Ovary (tissue), 10 donors: ENCODE measurements at regions of chr15 and their contacts with region 1.

Region 1: DNA sequence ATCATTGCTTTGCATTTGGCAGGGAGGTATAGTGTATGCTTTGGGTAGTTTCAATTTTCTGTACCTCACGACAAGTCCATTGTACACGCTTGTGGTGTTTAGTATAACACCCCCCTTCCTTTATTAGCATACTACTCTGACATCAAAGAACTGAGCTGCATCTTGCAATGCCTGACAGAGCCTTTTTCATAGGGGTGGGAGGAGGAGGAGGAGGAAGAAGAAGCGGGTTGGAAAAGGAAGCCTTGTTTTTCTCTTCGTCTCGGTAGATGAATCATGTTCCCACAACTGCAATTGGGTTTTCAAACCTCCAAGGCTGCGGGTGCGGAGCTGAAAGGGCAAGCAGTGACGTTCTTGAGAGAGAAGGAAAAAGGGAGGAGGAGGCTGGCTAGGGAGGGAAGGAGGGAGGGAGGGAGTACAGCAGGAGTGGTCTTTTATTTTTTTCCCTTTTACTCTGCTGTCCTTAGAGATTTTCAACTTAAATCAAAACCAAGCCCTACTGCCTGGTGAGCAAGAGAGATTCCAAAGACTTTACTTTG is 175.7 kb downstream of the KLHL25 start:
- DNase-seq: peak; percentile 79 to 90 (median 83)
- H3K4me3 ChIP-seq: peak overlapping the region; percentile 72
- H3K27ac ChIP-seq: peak overlapping the region; percentile 17 to 76
- H3K4me1 ChIP-seq: peaks cover 12% of the 10 kb centered on the region
- H3K27me3 ChIP-seq: no peaks in the 10 kb centered on the region
- CTCF ChIP-seq: no peak
- EP300 ChIP-seq: no peak
- POLR2A ChIP-seq: peak; percentile 58

Region 2: DNA sequence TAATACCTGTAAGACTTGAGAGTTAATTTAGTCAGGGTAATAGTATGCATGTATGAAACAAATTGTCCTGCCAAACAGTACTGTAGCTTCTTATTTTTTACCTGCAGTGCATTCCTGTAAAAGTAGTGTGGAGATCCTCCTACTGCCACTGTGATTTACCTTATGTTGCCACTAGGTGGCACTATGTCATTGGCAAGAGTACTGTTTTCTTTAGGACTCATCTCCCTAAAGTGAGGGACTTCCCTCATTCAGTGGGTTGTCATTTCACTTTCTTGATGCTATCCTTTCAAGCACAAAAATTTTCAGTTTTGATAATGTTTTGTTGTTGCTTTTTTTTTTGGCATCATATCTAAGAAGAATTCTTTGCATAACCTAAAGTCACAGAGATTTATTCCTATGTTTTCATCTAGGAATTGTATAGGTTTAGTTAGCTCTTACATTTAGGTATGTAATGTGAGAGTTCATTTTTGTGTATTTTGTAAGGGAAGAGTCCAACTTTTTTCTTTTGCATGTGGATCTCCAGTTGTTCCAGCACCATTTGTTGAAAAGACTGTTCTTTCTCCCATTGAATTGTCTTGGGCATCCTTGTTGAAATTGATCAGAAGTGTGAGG is 133.0 kb before region 1 on chr15:
- intact Hi-C with region 1: loop called in 1 of 4 experiments (anchors 10 kb)
- DNase-seq: peak in 3 of 5 donors; percentile 23 to 72 (median 36)
- H3K4me3 ChIP-seq: no peak overlapping the region
- H3K27ac ChIP-seq: no peak overlapping the region
- H3K4me1 ChIP-seq: no peaks in the 10 kb centered on the region
- H3K27me3 ChIP-seq: no peaks in the 10 kb centered on the region
- CTCF ChIP-seq: peak; percentile 61 to 74 (median 67)
- EP300 ChIP-seq: no peak
- POLR2A ChIP-seq: no peak

Region 3: GRCh38 chr15:85543741-85544155 is 75.3 kb before region 1 on chr15:
- intact Hi-C with region 1: no loop called
- DNase-seq: peak; percentile 66 to 77 (median 73)
- H3K4me3 ChIP-seq: no peak overlapping the region
- H3K27ac ChIP-seq: no peak overlapping the region
- H3K4me1 ChIP-seq: no peaks in the 10 kb centered on the region
- H3K27me3 ChIP-seq: no peaks in the 10 kb centered on the region
- CTCF ChIP-seq: peak; percentile 20 to 49 (median 27)
- EP300 ChIP-seq: no peak
- POLR2A ChIP-seq: no peak

Region 4: GRCh38 chr15:85676720-85677098 is 57.7 kb after region 1 on chr15:
- intact Hi-C with region 1: loop called in 1 of 4 experiments (anchors 1 kb)
- DNase-seq: no peak
- H3K4me3 ChIP-seq: no peak overlapping the region
- H3K27ac ChIP-seq: no peak overlapping the region
- H3K4me1 ChIP-seq: peaks cover 4% of the 10 kb centered on the region
- H3K27me3 ChIP-seq: no peaks in the 10 kb centered on the region
- CTCF ChIP-seq: no peak
- EP300 ChIP-seq: no peak
- POLR2A ChIP-seq: no peak

Region 5: DNA sequence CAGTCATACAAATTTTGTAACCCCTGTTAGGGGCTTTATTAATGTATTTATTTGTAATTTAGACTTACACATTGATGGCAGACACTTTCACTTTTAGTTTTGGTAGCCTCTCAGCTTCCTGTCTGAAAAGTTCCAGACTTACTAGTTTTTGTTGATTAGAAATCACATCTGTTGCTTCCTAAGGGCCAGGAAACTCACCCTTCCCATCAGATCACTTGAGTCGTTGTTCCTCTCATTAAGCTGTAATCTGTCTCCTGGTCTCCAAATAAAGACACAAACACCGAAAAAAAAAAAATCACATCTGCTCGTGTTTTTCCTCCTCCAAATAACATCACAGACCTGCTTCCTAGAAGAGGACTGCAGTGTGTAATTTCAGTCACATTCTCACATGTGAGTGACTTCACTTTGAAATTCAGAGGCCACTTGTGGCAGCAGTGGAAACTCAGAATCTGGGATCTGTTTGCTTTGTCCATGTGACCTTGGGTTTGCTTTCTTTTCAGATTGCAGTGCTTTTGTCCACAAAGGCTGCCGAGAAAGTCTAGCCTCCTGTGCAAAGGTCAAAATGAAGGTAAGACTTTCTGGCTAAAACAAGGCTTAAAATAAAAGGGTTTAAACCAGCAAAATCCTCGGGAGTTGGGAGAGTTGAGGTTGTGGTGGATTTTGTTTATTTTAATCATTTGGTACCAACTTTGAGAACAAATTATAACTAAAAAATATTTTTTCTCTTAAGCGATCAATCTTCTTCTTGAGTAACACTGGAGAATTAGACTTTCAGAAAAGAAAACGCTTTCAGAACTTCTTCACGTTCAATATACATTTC is 88.7 kb after region 1 on chr15:
- intact Hi-C with region 1: loop called in 2 of 4 experiments (anchors 10 kb)
- DNase-seq: no peak
- H3K4me3 ChIP-seq: no peak overlapping the region
- H3K27ac ChIP-seq: peak overlapping the region; percentile 82 to 92
- H3K4me1 ChIP-seq: peaks cover 20% of the 10 kb centered on the region
- H3K27me3 ChIP-seq: no peaks in the 10 kb centered on the region
- CTCF ChIP-seq: no peak
- EP300 ChIP-seq: no peak
- POLR2A ChIP-seq: no peak

Region 6: GRCh38 chr15:85730001-85730820 is 111.2 kb after region 1 on chr15:
- intact Hi-C with region 1: loop called in 2 of 4 experiments (anchors 10 kb)
- DNase-seq: peak in 1 of 5 donors; percentile 58
- H3K4me3 ChIP-seq: no peak overlapping the region
- H3K27ac ChIP-seq: no peak overlapping the region
- H3K4me1 ChIP-seq: peaks cover 6% of the 10 kb centered on the region
- H3K27me3 ChIP-seq: no peaks in the 10 kb centered on the region
- CTCF ChIP-seq: peak; percentile 55 to 79 (median 66)
- EP300 ChIP-seq: no peak
- POLR2A ChIP-seq: no peak

Region 7: GRCh38 chr15:85794603-85795336 is 175.7 kb after region 1 on chr15 and contains the start of gene KLHL25:
- intact Hi-C with region 1: loop called in 1 of 4 experiments (anchors 10 kb)
- DNase-seq: peak; percentile 93 to 95 (median 94)
- H3K4me3 ChIP-seq: peak within 1 kb of the TSS; percentile 96
- H3K27ac ChIP-seq: peak within 1 kb of the TSS; percentile 47 to 85
- H3K4me1 ChIP-seq: peaks cover 5% of the 10 kb centered on the region
- H3K27me3 ChIP-seq: no peaks in the 10 kb centered on the region
- CTCF ChIP-seq: peak in 1 of 3 donors; percentile 13
- EP300 ChIP-seq: no peak
- POLR2A ChIP-seq: peak; percentile 71
- total RNA-seq, gene KLHL25: 5.3 to 9.6 (median 7.1) TPM

Region 8: DNA sequence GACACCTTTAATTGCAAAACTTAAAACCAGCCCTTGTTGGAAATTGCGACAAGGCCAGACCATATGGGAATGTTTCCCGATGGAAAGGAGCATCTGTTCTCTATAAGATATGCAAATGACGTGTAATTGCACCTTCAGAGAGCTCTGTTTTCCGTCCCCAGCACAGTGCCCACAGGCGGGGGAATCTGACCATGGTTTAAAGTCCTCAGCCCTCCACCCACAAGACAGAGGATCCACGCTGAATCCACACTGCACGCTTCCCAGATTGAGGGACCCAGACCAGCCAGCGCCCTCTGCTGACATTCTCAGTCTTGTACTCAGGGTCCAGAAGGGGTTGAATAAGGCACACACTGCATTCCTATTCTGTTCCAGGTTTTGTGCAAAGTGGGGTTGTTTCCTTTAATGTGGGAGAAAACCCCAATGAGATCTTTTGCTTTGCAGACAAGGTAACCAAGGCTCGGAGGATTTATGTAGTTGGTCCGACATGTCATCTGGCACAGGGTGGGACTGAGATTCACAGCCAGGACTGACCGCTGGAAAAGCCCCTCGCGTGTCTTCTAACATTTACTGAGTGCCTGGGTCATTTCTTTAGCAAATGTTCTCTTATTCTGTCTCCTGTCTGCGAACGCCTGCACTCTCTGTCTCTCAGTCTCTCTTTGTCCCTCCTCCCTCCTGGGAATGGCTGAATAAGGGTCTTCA is 212.5 kb after region 1 on chr15:
- intact Hi-C with region 1: loop called in 2 of 4 experiments (anchors 10 kb)
- DNase-seq: peak; percentile 69 to 82 (median 77)
- H3K4me3 ChIP-seq: no peak overlapping the region
- H3K27ac ChIP-seq: no peak overlapping the region
- H3K4me1 ChIP-seq: no peaks in the 10 kb centered on the region
- H3K27me3 ChIP-seq: no peaks in the 10 kb centered on the region
- CTCF ChIP-seq: peak; percentile 49 to 75 (median 52)
- EP300 ChIP-seq: no peak
- POLR2A ChIP-seq: no peak

Region 9: GRCh38 chr15:85854345-85855097 is 235.5 kb after region 1 on chr15:
- intact Hi-C with region 1: no loop called
- DNase-seq: peak in 2 of 5 donors; percentile 24 to 34
- H3K4me3 ChIP-seq: no peak overlapping the region
- H3K27ac ChIP-seq: no peak overlapping the region
- H3K4me1 ChIP-seq: no peaks in the 10 kb centered on the region
- H3K27me3 ChIP-seq: no peaks in the 10 kb centered on the region
- CTCF ChIP-seq: peak; percentile 51 to 68 (median 67)
- EP300 ChIP-seq: no peak
- POLR2A ChIP-seq: no peak